Transverse colon (tissue), 4 donors: ENCODE measurements at regions of chr7 and their contacts with region 1.

Region 1: DNA sequence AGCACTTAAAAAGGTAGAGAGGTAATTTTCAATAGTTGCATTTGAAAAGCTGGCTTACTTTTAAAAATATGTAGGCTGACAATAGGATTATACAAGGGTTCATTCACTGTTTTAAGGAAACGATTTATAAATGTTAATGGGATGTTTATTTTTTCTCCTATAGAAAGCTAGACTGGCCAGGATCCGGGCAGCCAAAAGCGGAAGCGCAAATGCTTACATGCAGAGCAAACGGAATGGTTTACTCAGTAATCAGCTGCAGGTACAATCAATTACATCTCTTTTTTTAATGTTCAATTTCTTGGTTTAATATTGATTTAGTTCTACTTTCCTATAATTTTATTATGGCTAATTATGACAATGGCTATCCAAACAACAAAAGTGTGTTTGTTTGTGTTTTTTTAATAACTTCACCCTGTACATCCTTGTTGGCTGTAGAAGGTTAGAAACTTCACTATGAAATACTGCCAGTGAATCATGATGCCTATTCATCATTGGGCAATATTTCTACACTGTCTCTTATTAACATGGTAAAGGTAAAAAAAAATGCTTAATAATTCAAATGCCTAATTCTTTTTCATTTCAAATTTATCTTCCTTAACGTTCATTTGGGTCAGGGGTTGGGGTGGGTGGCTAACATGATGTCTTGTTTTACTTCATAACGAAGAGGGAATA is 116.4 kb downstream of the TSPAN12 start:
- DNase-seq: no peak
- H3K4me3 ChIP-seq: no peak overlapping the region
- H3K27ac ChIP-seq: no peak overlapping the region
- H3K4me1 ChIP-seq: no peaks in the 10 kb centered on the region
- H3K27me3 ChIP-seq: no peaks in the 10 kb centered on the region
- CTCF ChIP-seq: no peak
- EP300 ChIP-seq: no peak
- POLR2A ChIP-seq: no peak

Region 2: DNA sequence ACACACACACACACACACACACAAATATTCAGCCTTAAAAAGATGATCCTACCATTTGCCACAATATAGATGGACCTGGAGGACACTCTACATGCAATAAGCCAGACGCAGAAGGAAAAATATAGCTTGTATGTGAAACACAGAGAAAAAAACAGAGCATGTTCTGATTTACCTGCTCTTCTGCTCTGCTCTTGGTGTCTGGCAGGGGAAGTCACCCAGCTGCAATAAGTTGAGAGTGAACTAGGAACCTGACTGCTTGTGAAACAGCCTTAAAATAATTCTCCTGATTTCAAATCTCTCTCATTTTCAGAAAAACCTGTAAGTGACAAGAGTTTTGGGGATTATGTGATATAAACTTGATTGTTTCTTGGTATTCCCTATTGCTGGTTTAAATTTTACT is 499.5 kb before region 1 on chr7:
- in situ Hi-C with region 1: no loop called
- intact Hi-C with region 1: no loop called
- DNase-seq: no peak
- H3K4me3 ChIP-seq: no peak overlapping the region
- H3K27ac ChIP-seq: no peak overlapping the region
- H3K4me1 ChIP-seq: no peaks in the 10 kb centered on the region
- H3K27me3 ChIP-seq: no peaks in the 10 kb centered on the region
- CTCF ChIP-seq: no peak
- EP300 ChIP-seq: no peak
- POLR2A ChIP-seq: no peak

Region 3: DNA sequence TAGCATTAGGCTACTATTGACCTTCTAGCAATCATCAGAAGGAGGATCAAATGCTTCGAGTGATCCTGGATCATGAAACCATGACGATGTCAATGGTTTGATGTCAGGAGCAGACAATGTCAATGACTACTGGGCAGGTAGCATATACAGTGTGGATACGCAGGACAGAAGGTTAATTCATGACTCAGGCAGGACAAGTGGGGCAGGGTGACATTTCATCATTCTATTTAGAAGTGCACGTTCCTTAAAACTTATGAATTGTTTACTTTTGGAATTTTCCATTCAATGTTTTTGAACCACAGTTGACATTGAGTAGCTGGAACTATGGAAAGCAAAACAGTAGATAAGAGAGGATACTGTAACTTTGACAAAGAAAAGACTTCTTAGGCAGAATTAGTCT is 24.3 kb before region 1 on chr7:
- in situ Hi-C with region 1: no loop called
- intact Hi-C with region 1: loop called (anchors 1 kb)
- DNase-seq: no peak
- H3K4me3 ChIP-seq: no peak overlapping the region
- H3K27ac ChIP-seq: no peak overlapping the region
- H3K4me1 ChIP-seq: no peaks in the 10 kb centered on the region
- H3K27me3 ChIP-seq: no peaks in the 10 kb centered on the region
- CTCF ChIP-seq: no peak
- EP300 ChIP-seq: no peak
- POLR2A ChIP-seq: no peak

Region 4: GRCh38 chr7:120838281-120838682 is 96.8 kb after region 1 on chr7:
- in situ Hi-C with region 1: no loop called
- intact Hi-C with region 1: no loop called
- DNase-seq: no peak
- H3K4me3 ChIP-seq: no peak overlapping the region
- H3K27ac ChIP-seq: no peak overlapping the region
- H3K4me1 ChIP-seq: peaks cover 0 to 12% (median 0%) of the 10 kb centered on the region in 4 donors
- H3K27me3 ChIP-seq: no peaks in the 10 kb centered on the region
- CTCF ChIP-seq: no peak
- EP300 ChIP-seq: no peak
- POLR2A ChIP-seq: no peak

Region 5: DNA sequence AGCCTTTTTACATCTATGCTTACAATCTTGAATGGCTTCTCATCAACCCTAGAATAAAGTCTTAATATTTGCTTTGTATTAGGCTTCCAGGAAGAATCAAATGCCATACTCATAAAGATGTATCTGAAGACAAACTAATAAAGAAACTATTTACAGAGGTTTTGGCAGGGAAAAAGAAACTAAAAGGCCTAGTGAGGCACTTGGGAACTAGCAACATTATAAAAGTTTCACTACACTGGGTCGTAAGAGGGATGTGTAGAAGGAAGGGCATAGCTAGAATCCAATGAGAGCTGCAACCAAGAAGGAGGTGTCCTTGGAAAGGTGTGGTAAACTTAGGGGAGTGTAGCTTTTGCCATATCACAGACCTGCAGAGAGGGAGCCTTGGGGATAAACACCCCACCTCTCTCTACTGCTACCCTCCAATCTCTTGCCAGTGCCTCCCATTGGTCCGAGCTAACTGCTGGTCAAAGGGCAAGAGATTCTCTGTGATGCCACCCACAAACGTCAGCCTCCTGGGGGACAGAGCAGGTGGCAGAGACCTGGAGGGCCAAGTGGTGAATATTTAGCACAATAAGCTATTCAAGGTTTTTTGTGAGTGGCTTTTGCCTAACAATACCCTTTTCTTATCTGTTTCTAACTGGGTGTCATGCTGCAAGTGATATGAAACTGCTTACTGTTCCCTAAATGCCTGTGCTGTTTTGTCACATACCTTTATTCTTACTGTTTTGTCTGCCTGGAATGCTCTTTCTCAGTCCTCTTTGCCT is 307.7 kb after region 1 on chr7:
- in situ Hi-C with region 1: no loop called
- intact Hi-C with region 1: no loop called
- DNase-seq: no peak
- H3K4me3 ChIP-seq: no peak overlapping the region
- H3K27ac ChIP-seq: no peak overlapping the region
- H3K4me1 ChIP-seq: no peaks in the 10 kb centered on the region
- H3K27me3 ChIP-seq: no peaks in the 10 kb centered on the region
- CTCF ChIP-seq: no peak
- EP300 ChIP-seq: no peak
- POLR2A ChIP-seq: no peak